Right lobe of liver (tissue), 6 donors: ENCODE measurements at regions of chr15 and their contacts with region 1.

Region 1: GRCh38 chr15:89888214-89888804 is 5.5 kb downstream of the AP3S2 start:
- DNase-seq: no peak
- ATAC-seq: peak; percentile 66 to 86 (median 70)
- H3K4me3 ChIP-seq: no peak overlapping the region
- H3K27ac ChIP-seq: no peak overlapping the region
- H3K4me1 ChIP-seq: peaks cover 0 to 15% (median 0%) of the 10 kb centered on the region in 4 donors
- H3K27me3 ChIP-seq: no peaks in the 10 kb centered on the region
- CTCF ChIP-seq: peak; percentile 47 to 52 (median 48)
- POLR2A ChIP-seq: no peak

Region 2: DNA sequence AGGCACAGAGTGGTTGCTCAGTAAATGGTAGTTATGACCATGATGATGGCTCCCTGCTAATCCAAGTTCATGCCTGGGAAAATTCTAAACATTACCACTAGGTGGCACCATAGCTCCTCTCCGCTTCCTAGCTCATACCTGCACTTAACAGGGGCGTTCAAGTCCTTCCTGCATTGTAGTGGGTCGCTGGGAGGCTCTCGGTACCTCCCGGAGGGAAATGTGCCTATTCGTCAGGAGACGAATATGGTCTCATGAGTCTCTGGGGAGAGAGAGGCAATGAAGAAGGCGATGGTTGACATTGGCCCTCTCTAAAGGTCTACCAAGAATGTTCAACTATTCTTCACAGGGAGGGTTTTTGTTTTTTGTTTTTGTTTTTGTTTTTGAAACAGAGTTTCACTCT is 148.2 kb before region 1 on chr15:
- intact Hi-C with region 1: loop called (anchors 5 to 10 kb)
- DNase-seq: peak in 1 of 3 donors; percentile 57
- ATAC-seq: peak; percentile 87 to 97 (median 94)
- H3K4me3 ChIP-seq: no peak overlapping the region
- H3K27ac ChIP-seq: no peak overlapping the region
- H3K4me1 ChIP-seq: no peaks in the 10 kb centered on the region
- H3K27me3 ChIP-seq: no peaks in the 10 kb centered on the region
- CTCF ChIP-seq: peak; percentile 90 to 95 (median 92)
- POLR2A ChIP-seq: no peak

Region 3: GRCh38 chr15:89964232-89964954 is 76.1 kb after region 1 on chr15:
- intact Hi-C with region 1: no loop called
- DNase-seq: no peak
- ATAC-seq: peak in 2 of 4 donors; percentile 28 to 30
- H3K4me3 ChIP-seq: no peak overlapping the region
- H3K27ac ChIP-seq: no peak overlapping the region
- H3K4me1 ChIP-seq: no peaks in the 10 kb centered on the region
- H3K27me3 ChIP-seq: no peaks in the 10 kb centered on the region
- CTCF ChIP-seq: no peak
- POLR2A ChIP-seq: no peak

Region 4: GRCh38 chr15:90241343-90242192 is 353.3 kb after region 1 on chr15:
- intact Hi-C with region 1: no loop called
- DNase-seq: no peak
- ATAC-seq: peak; percentile 12 to 72 (median 30)
- H3K4me3 ChIP-seq: no peak overlapping the region
- H3K27ac ChIP-seq: no peak overlapping the region
- H3K4me1 ChIP-seq: no peaks in the 10 kb centered on the region
- H3K27me3 ChIP-seq: no peaks in the 10 kb centered on the region
- CTCF ChIP-seq: no peak
- POLR2A ChIP-seq: no peak